ENCODE measurements at regions of chr11 and their contacts with region 1.

Region 1: GRCh38 chr11:43895601-43896000 is 15.0 kb downstream of the ALKBH3 start:
- DNase-seq: no peak
- ATAC-seq: no peak
- H3K4me3 Mint-ChIP-seq: no peak overlapping the region
- H3K27ac Mint-ChIP-seq: no peak overlapping the region
- H3K4me1 Mint-ChIP-seq: no peaks in the 10 kb centered on the region
- H3K27me3 Mint-ChIP-seq: no peaks in the 10 kb centered on the region

Region 2: DNA sequence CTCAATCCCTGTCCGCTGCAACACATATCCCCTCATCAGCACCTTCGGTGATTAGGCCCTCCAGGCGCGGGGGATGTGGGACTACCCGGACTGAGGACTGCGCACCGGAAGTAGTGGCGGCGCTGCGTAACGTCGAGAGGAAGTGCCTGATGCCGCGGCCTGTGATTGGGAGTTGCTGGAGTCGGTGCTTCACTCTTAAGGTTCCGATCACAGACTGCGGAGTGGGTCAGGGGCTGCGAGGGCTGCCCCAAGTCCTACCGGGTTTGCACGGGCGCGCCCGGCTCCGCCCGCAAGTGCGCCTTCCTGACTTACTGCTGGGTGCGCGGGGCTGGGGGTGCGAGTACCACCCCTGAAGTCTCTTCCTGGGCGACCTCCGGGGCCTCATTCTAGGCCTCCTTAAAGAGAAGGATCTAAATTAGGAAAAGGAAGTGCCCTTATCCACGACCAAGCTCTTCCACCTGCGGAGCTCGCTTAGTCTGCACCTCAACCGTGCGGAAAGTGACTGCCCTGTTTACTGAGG is 14.9 kb before region 1 on chr11 and contains the start of gene ALKBH3:
- CTCF ChIA-PET with region 1: interaction called, 20 read pairs
- POLR2A ChIA-PET with region 1: interaction called, 4 read pairs
- DNase-seq: peak; percentile 94
- ATAC-seq: peak; percentile 99
- H3K4me3 Mint-ChIP-seq: peak within 1 kb of the TSS; percentile 91
- H3K27ac Mint-ChIP-seq: peak within 1 kb of the TSS; percentile 78
- H3K4me1 Mint-ChIP-seq: peaks cover 22% of the 10 kb centered on the region
- H3K27me3 Mint-ChIP-seq: peaks cover 7% of the 10 kb centered on the region
- total RNA-seq, gene ALKBH3: 43.7 to 49.1 TPM

Region 3: GRCh38 chr11:43919852-43920597 is 24.4 kb after region 1 on chr11:
- CTCF ChIA-PET with region 1: interaction called, 11 read pairs
- POLR2A ChIA-PET with region 1: no interaction called
- DNase-seq: no peak
- ATAC-seq: no peak
- H3K4me3 Mint-ChIP-seq: no peak overlapping the region
- H3K27ac Mint-ChIP-seq: no peak overlapping the region
- H3K4me1 Mint-ChIP-seq: peaks cover 5% of the 10 kb centered on the region
- H3K27me3 Mint-ChIP-seq: no peaks in the 10 kb centered on the region

Measured in activated CD8-positive, alpha-beta T cell treated with anti-CD3 and anti-CD28 coated beads, Interleukin-2, amount 10 ng/mL, durations not matched to agents 7 days and 5 days (primary cell).